Activated CD4-positive, alpha-beta T cell treated with anti-CD3 and anti-CD28 coated beads, Interleukin-2, amount 10 ng/mL, durations not matched to agents 24 days and 14 days (primary cell): ENCODE measurements at regions of chr20 and their contacts with region 1.

Region 1: GRCh38 chr20:33853507-33853813 is 42.3 kb downstream of the CHMP4B start:
- DNase-seq: peak; percentile 85
- H3K4me3 Mint-ChIP-seq: peak overlapping the region; percentile 66
- H3K27ac Mint-ChIP-seq: peak overlapping the region; percentile 86
- H3K4me1 Mint-ChIP-seq: peaks cover 59% of the 10 kb centered on the region
- H3K27me3 Mint-ChIP-seq: no peaks in the 10 kb centered on the region

Region 2: GRCh38 chr20:33515569-33516216 is 337.8 kb before region 1 on chr20:
- intact Hi-C with region 1: no loop called
- DNase-seq: no peak
- H3K4me3 Mint-ChIP-seq: no peak overlapping the region
- H3K27ac Mint-ChIP-seq: no peak overlapping the region
- H3K4me1 Mint-ChIP-seq: peaks cover 7% of the 10 kb centered on the region
- H3K27me3 Mint-ChIP-seq: no peaks in the 10 kb centered on the region

Region 3: DNA sequence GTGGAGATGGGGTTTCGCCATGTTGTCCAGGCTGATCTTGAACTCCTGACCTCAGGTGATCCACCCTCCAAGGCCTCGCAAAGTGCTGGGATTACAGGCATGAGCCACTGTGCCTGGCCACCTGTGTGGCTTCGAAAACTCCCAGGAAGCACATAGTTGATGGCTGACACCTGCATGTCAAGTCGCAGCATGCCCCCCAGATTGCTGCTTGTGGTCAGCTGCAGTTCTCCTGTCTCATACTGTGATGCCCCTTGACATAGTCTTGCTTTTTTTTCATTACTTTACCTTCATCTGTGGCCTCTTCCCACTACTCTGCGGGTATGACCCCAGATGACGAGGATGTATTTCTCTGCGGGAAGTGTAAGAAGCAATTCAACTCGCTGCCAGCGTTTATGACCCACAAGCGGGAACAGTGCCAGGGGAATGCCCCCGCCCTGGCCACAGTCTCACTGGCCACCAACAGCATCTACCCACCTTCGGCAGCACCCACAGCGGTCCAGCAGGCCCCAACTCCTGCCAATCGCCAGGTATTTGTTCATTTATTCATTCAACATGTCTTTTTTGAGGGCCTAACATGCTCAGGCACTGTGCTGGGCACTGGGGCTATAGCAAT is 108.6 kb before region 1 on chr20:
- intact Hi-C with region 1: no loop called
- DNase-seq: no peak
- H3K4me3 Mint-ChIP-seq: no peak overlapping the region
- H3K27ac Mint-ChIP-seq: no peak overlapping the region
- H3K4me1 Mint-ChIP-seq: peaks cover 2% of the 10 kb centered on the region
- H3K27me3 Mint-ChIP-seq: no peaks in the 10 kb centered on the region

Region 4: GRCh38 chr20:33810885-33811777 is 42.3 kb before region 1 on chr20 and contains the start of gene CHMP4B:
- intact Hi-C with region 1: loop called (anchors 5 kb)
- DNase-seq: peak; percentile 100
- H3K4me3 Mint-ChIP-seq: peak within 1 kb of the TSS; percentile 99
- H3K27ac Mint-ChIP-seq: peak within 1 kb of the TSS; percentile 98
- H3K4me1 Mint-ChIP-seq: peaks cover 34% of the 10 kb centered on the region
- H3K27me3 Mint-ChIP-seq: peaks cover 2% of the 10 kb centered on the region
- total RNA-seq, gene CHMP4B: 95.6 and 102 TPM in 2 replicates

Region 5: DNA sequence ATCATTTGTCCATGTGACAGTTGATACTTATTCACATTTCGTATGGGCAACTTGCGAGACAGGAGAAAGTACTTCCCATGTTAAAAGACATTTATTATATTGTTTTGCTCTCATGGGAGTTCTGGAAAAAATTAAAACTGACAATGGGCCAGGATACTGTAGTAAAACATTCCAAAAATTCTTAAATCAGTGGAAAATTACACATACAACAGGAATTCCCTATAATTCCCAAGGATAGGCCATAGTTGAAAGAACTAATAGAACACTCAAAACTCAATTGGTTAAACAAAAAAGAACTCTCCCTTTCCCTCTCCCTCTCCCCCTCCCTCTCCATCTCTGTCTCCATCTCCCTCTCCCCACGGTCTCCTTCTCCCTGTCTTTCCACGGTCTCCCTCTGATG is 278.0 kb after region 1 on chr20:
- intact Hi-C with region 1: no loop called
- DNase-seq: no peak
- H3K4me3 Mint-ChIP-seq: no peak overlapping the region
- H3K27ac Mint-ChIP-seq: no peak overlapping the region
- H3K4me1 Mint-ChIP-seq: peaks cover 3% of the 10 kb centered on the region
- H3K27me3 Mint-ChIP-seq: peaks cover 24% of the 10 kb centered on the region

Region 6: DNA sequence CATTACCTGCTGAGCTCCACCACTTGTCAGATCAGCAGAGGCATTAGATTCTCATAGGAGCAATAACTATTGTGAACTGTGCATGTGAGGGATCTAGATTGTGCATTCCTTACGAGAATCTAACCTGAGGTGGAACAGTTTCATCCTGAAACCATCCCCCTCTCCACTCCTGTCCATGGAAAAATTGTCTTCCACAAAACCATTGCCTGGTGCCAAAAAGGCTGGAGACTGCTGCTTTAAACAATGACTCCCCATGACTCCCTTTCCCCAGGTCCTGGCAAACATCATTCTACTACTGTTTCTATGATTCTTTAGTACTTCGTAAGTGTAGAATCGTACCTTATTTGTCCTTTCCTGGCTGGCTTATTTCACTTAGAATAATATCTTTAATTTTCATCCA is 653.0 kb after region 1 on chr20:
- intact Hi-C with region 1: no loop called
- DNase-seq: no peak
- H3K4me3 Mint-ChIP-seq: no peak overlapping the region
- H3K27ac Mint-ChIP-seq: no peak overlapping the region
- H3K4me1 Mint-ChIP-seq: no peaks in the 10 kb centered on the region
- H3K27me3 Mint-ChIP-seq: no peaks in the 10 kb centered on the region